ENCODE measurements at regions of chrX and their contacts with region 1.

Region 1: DNA sequence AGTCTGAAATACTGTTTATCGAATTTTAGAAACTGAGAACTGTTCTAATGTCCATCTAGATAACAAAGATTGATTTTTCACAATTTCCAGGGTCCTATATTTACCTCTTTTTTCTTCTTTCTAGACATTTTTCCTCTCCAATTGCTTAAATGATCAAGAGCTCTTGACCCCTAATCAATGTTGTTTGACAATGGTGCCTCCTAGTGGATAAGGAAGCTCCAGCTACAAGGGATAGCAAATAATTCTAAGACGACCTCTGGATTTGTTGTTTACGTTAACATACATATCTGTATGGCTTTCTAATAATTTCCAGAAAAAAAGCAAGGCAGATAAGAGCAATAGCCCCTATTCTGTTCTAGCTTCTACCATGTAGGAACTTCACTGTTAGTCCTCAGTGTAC is 35.8 kb downstream of the GPR82 start:
- DNase-seq: no peak
- H3K4me3 Mint-ChIP-seq: no peak overlapping the region
- H3K27ac Mint-ChIP-seq: no peak overlapping the region
- H3K4me1 Mint-ChIP-seq: peaks cover 3% of the 10 kb centered on the region
- H3K27me3 Mint-ChIP-seq: no peaks in the 10 kb centered on the region

Region 2: GRCh38 chrX:41561045-41561444 is 198.8 kb before region 1 on chrX:
- CTCF ChIA-PET with region 1: interaction called, 4 read pairs
- intact Hi-C with region 1: loop called (anchors 1 kb)
- DNase-seq: peak; percentile 56
- H3K4me3 Mint-ChIP-seq: no peak overlapping the region
- H3K27ac Mint-ChIP-seq: peak overlapping the region; percentile 41
- H3K4me1 Mint-ChIP-seq: peaks cover 28% of the 10 kb centered on the region
- H3K27me3 Mint-ChIP-seq: no peaks in the 10 kb centered on the region

Region 3: GRCh38 chrX:41923257-41923969 is 163.6 kb after region 1 on chrX and contains the start of gene CASK:
- CTCF ChIA-PET with region 1: no interaction called
- intact Hi-C with region 1: no loop called
- DNase-seq: peak; percentile 91
- H3K4me3 Mint-ChIP-seq: peak within 1 kb of the TSS; percentile 82
- H3K27ac Mint-ChIP-seq: peak within 1 kb of the TSS; percentile 73
- H3K4me1 Mint-ChIP-seq: peaks cover 24% of the 10 kb centered on the region
- H3K27me3 Mint-ChIP-seq: no peaks in the 10 kb centered on the region
- total RNA-seq, gene CASK: 15.4 to 18.9 TPM

Region 4: DNA sequence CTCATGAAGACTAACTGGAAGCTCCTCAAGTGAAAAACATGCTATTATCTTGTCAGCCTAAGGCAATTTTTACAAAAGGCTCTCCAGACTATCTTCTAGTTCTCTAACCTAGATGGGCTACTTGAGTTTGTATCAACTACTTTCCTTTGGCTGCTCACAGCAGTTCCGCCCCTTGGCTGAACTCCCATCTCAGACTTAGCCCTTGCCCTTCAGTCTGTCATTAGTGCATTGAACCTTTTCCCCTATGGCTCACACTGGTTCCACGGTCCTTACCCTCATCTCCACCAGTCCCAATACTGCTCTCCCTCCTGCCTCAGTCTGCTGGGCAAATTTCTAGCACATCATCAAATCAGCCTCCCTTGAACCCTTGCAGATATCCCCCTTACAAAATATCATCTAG is 655.8 kb after region 1 on chrX:
- CTCF ChIA-PET with region 1: no interaction called
- intact Hi-C with region 1: no loop called
- DNase-seq: no peak
- H3K4me3 Mint-ChIP-seq: no peak overlapping the region
- H3K27ac Mint-ChIP-seq: no peak overlapping the region
- H3K4me1 Mint-ChIP-seq: peaks cover 4% of the 10 kb centered on the region
- H3K27me3 Mint-ChIP-seq: no peaks in the 10 kb centered on the region

Measured in activated naive CD4-positive, alpha-beta T cell treated with anti-CD3 and anti-CD28 coated beads for 36 hours (primary cell).